ENCODE measurements at regions of chr6 and their contacts with region 1.

Region 1: GRCh38 chr6:108453597-108454185 is 107.0 kb upstream of the FOXO3 start:
- DNase-seq: no peak
- H3K4me3 ChIP-seq: no peak overlapping the region
- H3K27ac ChIP-seq: peak overlapping the region; percentile 48
- H3K4me1 ChIP-seq: peaks cover 4% of the 10 kb centered on the region
- H3K27me3 ChIP-seq: no peaks in the 10 kb centered on the region
- CTCF ChIP-seq: no peak

Region 2: GRCh38 chr6:108080010-108080780 is 373.5 kb before region 1 on chr6:
- intact Hi-C with region 1: no loop called
- DNase-seq: no peak
- H3K4me3 ChIP-seq: no peak overlapping the region
- H3K27ac ChIP-seq: no peak overlapping the region
- H3K4me1 ChIP-seq: no peaks in the 10 kb centered on the region
- H3K27me3 ChIP-seq: no peaks in the 10 kb centered on the region
- CTCF ChIP-seq: no peak

Region 3: GRCh38 chr6:108312605-108313004 is 141.1 kb before region 1 on chr6:
- intact Hi-C with region 1: loop called (anchors 5 kb)
- DNase-seq: peak; percentile 63
- H3K4me3 ChIP-seq: no peak overlapping the region
- H3K27ac ChIP-seq: no peak overlapping the region
- H3K4me1 ChIP-seq: peaks cover 5% of the 10 kb centered on the region
- H3K27me3 ChIP-seq: no peaks in the 10 kb centered on the region
- CTCF ChIP-seq: no peak